OCI-LY7 (cell line): ENCODE measurements at regions of chr17 and their contacts with region 1.

Region 1: GRCh38 chr17:28726226-28727130 is at the start of gene TLCD1:
- DNase-seq: peak; percentile 95
- H3K4me3 ChIP-seq: peak within 1 kb of the TSS; percentile 69
- H3K27ac ChIP-seq: peak within 1 kb of the TSS; percentile 94
- H3K4me1 ChIP-seq: peaks cover 76% of the 10 kb centered on the region
- CTCF ChIP-seq: peak; percentile 99
- total RNA-seq, gene TLCD1: 0.28 and 1.6 TPM in 2 replicates

Region 2: GRCh38 chr17:28743225-28744103 is 17.0 kb after region 1 on chr17 and contains the start of gene TRAF4:
- CTCF ChIA-PET with region 1: interaction called, 27 read pairs
- POLR2A ChIA-PET with region 1: interaction called, 56 read pairs
- intact Hi-C with region 1: loop called (anchors 1 kb)
- DNase-seq: peak; percentile 92
- H3K4me3 ChIP-seq: peak within 1 kb of the TSS; percentile 98
- H3K27ac ChIP-seq: peak within 1 kb of the TSS; percentile 95
- H3K4me1 ChIP-seq: peaks cover 73% of the 10 kb centered on the region
- CTCF ChIP-seq: no peak
- total RNA-seq, gene TRAF4: 73.6 and 105 TPM in 2 replicates

Region 3: DNA sequence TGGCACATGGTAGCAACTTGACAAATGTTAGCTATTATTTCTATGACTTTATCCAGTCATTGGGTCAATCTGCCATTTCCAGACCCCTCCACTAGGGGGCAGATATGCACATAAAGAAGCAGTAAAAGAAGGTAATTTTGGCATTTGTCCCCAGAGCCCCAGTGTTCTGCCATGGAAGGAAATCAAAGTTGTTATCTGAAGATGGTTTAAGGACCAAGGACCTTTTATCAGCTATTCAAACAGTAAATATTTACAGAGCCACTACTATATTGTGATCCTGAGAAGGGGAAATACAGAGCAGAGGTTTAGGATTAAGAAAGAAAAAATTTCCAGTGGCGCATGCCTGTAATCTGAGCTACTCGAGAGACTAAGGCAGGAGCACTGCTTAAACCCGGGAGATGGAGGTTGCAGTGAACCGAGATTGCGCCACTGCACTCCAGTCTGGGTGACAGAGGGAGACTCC is 37.4 kb after region 1 on chr17:
- CTCF ChIA-PET with region 1: interaction called, 10 read pairs
- POLR2A ChIA-PET with region 1: interaction called, 4 read pairs
- intact Hi-C with region 1: loop called (anchors 5 kb)
- DNase-seq: peak; percentile 84
- H3K4me3 ChIP-seq: no peak overlapping the region
- H3K27ac ChIP-seq: no peak overlapping the region
- H3K4me1 ChIP-seq: no peaks in the 10 kb centered on the region
- CTCF ChIP-seq: peak; percentile 99

Region 4: DNA sequence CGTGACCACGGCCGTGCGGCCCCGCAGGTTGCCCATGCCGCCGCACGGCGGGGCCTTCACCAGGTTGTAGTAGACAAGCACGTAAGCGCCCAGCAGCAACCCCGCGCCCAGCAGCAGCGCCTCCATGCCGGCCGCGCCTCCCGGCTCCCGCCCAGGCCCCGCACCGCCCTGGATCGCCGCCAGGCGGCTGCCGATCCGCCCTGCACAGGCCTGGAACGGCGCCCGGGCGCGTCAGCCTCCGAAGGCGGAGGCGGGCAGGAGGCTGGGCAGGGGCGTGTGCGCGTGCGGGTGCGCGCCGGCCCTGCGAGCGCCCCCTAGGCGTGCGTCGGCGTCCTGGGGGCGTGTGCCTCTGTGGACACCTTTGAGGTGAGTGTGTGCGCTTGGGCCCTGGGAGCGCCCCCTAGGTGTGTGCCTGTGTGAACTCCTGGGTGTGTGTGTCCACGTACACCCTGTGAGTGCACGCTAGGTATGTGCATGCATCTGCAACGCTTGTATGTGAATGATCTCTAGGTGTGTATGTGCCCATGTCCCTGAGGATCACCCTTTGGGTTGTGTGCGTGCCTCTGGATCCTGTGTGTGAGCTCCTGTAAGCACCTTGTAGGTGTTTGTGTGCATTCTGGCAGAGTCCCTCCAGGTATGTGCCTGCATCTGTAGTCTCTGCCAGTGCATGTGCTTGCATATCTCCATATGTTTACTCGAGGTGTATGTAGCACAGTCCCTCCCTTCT is 176.5 kb after region 1 on chr17 and contains the start of gene DHRS13:
- CTCF ChIA-PET with region 1: interaction called, 3 read pairs
- POLR2A ChIA-PET with region 1: interaction called, 4 read pairs
- intact Hi-C with region 1: loop called (anchors 1 kb)
- DNase-seq: peak; percentile 97
- H3K4me3 ChIP-seq: peak within 1 kb of the TSS; percentile 77
- H3K27ac ChIP-seq: peak within 1 kb of the TSS; percentile 80
- H3K4me1 ChIP-seq: peaks cover 28% of the 10 kb centered on the region
- CTCF ChIP-seq: peak; percentile 97
- total RNA-seq, gene DHRS13: 27.1 and 28.4 TPM in 2 replicates